ENCODE measurements at regions of chr18 and their contacts with region 1.

Region 1: GRCh38 chr18:21955757-21956652 is 213.4 kb upstream of the GATA6 start:
- DNase-seq: peak; percentile 73 to 85
- ATAC-seq: peak; percentile 72 to 96 (median 90)
- H3K4me3 ChIP-seq: no peak overlapping the region
- H3K27ac ChIP-seq: no peak overlapping the region
- H3K4me1 ChIP-seq: peaks cover 0 to 13% (median 0%) of the 10 kb centered on the region in 9 donors
- H3K27me3 ChIP-seq: peaks cover 0 to 3% (median 0%) of the 10 kb centered on the region in 7 donors
- CTCF ChIP-seq: peak; percentile 81 to 95 (median 91)

Region 2: DNA sequence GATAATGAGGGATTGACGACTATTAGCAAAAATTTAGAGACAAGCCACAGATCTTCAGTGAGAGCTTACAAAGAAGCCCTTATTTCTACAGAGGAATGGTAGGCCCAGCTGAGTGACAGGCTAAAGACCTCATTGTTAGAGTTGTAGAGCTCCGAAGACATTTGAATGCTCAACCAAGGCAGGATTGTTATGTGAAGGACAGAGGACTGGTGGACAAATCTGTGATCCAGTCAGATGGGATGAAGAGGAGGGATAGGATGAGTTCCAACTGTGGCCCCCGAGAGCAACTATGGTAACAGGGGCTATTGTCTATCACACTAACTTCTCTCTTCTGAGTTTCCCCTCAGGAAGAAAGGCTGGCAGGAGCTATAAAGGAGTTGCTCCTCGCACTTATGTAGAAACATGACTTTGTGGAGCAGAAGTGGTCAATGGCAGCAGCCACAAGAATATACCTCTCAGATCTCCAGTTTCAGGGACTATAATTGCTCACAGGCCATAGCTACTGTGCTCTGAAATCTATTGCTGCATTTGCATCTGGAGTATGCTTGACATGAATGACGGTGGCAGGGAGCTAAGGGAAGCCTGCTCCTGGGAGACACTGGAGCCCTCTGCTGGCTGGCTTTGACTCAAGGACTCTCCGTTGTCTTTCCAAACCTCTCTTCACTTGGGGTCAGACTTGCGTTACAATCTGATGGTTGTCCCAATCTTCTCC is 764.3 kb before region 1 on chr18:
- intact Hi-C with region 1: loop called in 5 of 10 experiments (anchors 2 to 10 kb)
- DNase-seq: peak; percentile 20 to 21
- ATAC-seq: peak in 6 of 8 donors; percentile 51 to 85 (median 59)
- H3K4me3 ChIP-seq: no peak overlapping the region
- H3K27ac ChIP-seq: no peak overlapping the region
- H3K4me1 ChIP-seq: no peaks in the 10 kb centered on the region
- H3K27me3 ChIP-seq: peaks cover 0 to 7% (median 0%) of the 10 kb centered on the region in 7 donors
- CTCF ChIP-seq: peak in 7 of 9 donors; percentile 44 to 66 (median 55)

Region 3: GRCh38 chr18:21489119-21489750 is 466.8 kb before region 1 on chr18:
- intact Hi-C with region 1: loop called in 2 of 10 experiments (anchors 2 to 10 kb)
- DNase-seq: peak in 1 of 2 donors; percentile 26
- ATAC-seq: peak in 7 of 8 donors; percentile 65 to 83 (median 72)
- H3K4me3 ChIP-seq: no peak overlapping the region
- H3K27ac ChIP-seq: no peak overlapping the region
- H3K4me1 ChIP-seq: peaks cover 0 to 6% (median 0%) of the 10 kb centered on the region in 9 donors
- H3K27me3 ChIP-seq: no peaks in the 10 kb centered on the region
- CTCF ChIP-seq: peak; percentile 35 to 75 (median 72)

Region 4: GRCh38 chr18:21740724-21741510 is 215.1 kb before region 1 on chr18 and contains the start of gene MIB1:
- intact Hi-C with region 1: no loop called
- DNase-seq: peak; percentile 64 to 99
- ATAC-seq: peak; percentile 81 to 95 (median 86)
- H3K4me3 ChIP-seq: peak within 1 kb of the TSS; percentile 66 to 99 (median 89)
- H3K27ac ChIP-seq: peak within 1 kb of the TSS; percentile 83 to 99 (median 98)
- H3K4me1 ChIP-seq: peaks cover 0 to 44% (median 14%) of the 10 kb centered on the region in 9 donors
- H3K27me3 ChIP-seq: no peaks in the 10 kb centered on the region
- CTCF ChIP-seq: peak in 1 of 9 donors; percentile 6
- total RNA-seq, gene MIB1: 16.8 to 32.2 (median 26.2) TPM

Region 5: GRCh38 chr18:21815101-21815500 is 140.9 kb before region 1 on chr18:
- intact Hi-C with region 1: loop called in 1 of 10 experiments (anchors 10 kb)
- DNase-seq: no peak
- ATAC-seq: no peak
- H3K4me3 ChIP-seq: no peak overlapping the region
- H3K27ac ChIP-seq: no peak overlapping the region
- H3K4me1 ChIP-seq: no peaks in the 10 kb centered on the region
- H3K27me3 ChIP-seq: no peaks in the 10 kb centered on the region
- CTCF ChIP-seq: no peak

Region 6: DNA sequence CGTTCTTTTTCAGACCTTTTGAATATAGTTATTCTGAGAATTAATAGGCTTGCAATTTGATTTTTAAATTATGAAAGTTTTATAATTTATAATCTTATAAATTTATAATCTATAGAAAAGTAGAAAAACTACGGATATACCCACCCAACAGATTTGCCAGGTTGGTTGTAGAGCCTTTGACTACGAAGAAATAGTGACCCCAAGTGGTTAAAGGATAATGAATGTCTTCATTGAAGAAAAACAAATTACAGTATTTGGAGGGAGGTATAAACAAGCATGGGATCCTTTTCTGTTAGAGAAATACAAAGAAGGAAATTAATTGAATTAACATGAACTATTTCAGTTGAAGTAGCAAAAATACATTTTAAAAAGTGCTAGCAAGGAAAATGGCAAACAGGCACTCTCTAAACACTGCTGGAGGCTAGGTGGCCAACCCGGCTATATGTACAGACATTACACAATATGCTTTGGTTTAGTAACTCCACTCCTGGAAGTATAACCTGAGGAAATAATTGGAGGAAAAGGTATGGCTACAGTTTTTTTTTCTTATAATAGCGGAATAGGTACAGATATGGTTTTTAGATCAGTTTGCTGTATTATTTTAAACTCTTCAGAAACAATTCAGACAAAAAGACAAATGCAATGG is 104.6 kb before region 1 on chr18:
- intact Hi-C with region 1: no loop called
- DNase-seq: no peak
- ATAC-seq: no peak
- H3K4me3 ChIP-seq: peak overlapping the region in 1 of 10 donors; percentile 6
- H3K27ac ChIP-seq: no peak overlapping the region
- H3K4me1 ChIP-seq: peaks cover 0 to 13% (median 0%) of the 10 kb centered on the region in 9 donors
- H3K27me3 ChIP-seq: no peaks in the 10 kb centered on the region
- CTCF ChIP-seq: peak in 8 of 9 donors; percentile 11 to 69 (median 54)

Region 7: GRCh38 chr18:21897811-21898210 is 58.2 kb before region 1 on chr18:
- intact Hi-C with region 1: loop called in 3 of 10 experiments (anchors 5 to 10 kb)
- DNase-seq: peak in 1 of 2 donors; percentile 47
- ATAC-seq: peak; percentile 56 to 81 (median 68)
- H3K4me3 ChIP-seq: no peak overlapping the region
- H3K27ac ChIP-seq: no peak overlapping the region
- H3K4me1 ChIP-seq: peaks cover 0 to 15% (median 0%) of the 10 kb centered on the region in 9 donors
- H3K27me3 ChIP-seq: no peaks in the 10 kb centered on the region
- CTCF ChIP-seq: peak; percentile 36 to 79 (median 68)

Region 8: GRCh38 chr18:21933931-21934765 is 21.9 kb before region 1 on chr18:
- intact Hi-C with region 1: no loop called
- DNase-seq: no peak
- ATAC-seq: no peak
- H3K4me3 ChIP-seq: no peak overlapping the region
- H3K27ac ChIP-seq: no peak overlapping the region
- H3K4me1 ChIP-seq: no peaks in the 10 kb centered on the region
- H3K27me3 ChIP-seq: no peaks in the 10 kb centered on the region
- CTCF ChIP-seq: no peak